MCF 10A (cell line): ENCODE measurements at regions of chr14 and their contacts with region 1.

Region 1: DNA sequence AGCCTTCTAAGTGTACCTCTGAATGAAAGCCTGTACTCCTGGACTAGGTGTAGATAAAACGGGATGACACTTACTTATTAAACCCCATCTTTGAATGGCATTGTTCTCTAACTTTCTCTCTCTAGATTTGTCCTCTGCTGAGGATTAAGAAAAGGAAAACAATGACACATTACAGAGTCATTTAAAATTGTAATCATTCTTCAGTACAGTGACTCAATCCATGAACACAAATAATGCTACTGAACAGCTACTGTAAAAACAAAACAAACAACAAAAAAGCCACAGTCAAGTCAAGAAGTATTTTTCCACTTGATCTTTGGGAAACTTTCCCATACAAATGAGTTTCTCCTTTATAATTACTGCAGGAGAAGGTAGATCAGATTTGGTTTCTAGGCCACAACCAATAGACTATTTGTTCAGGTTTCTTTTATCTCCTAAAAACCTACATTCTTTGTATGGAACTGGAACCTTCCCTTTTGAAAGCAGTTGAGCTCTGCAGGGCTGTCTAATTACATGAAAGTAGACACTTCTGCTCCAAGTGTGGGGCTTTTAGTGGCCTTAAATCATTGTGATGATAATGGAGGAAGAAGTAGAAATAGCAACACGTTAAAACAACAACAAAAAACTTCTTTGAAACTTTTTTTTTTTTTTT is 219.1 kb downstream of the ESR2 start:
- DNase-seq: peak; percentile 55
- H3K4me3 Mint-ChIP-seq: no peak overlapping the region
- H3K27ac Mint-ChIP-seq: peak overlapping the region; percentile 98
- H3K4me1 Mint-ChIP-seq: peaks cover 11% of the 10 kb centered on the region
- H3K27me3 Mint-ChIP-seq: no peaks in the 10 kb centered on the region
- CTCF ChIP-seq: no peak

Region 2: GRCh38 chr14:64060648-64061096 is 14.4 kb before region 1 on chr14:
- CTCF ChIA-PET with region 1: interaction called, 4 read pairs
- POLR2A ChIA-PET with region 1: interaction called, 121 read pairs
- intact Hi-C with region 1: no loop called
- DNase-seq: peak; percentile 95
- H3K4me3 Mint-ChIP-seq: no peak overlapping the region
- H3K27ac Mint-ChIP-seq: peak overlapping the region; percentile 98
- H3K4me1 Mint-ChIP-seq: peaks cover 17% of the 10 kb centered on the region
- H3K27me3 Mint-ChIP-seq: no peaks in the 10 kb centered on the region
- CTCF ChIP-seq: peak; percentile 62

Region 3: GRCh38 chr14:64095620-64096019 is 20.5 kb after region 1 on chr14:
- CTCF ChIA-PET with region 1: no interaction called
- POLR2A ChIA-PET with region 1: no interaction called
- intact Hi-C with region 1: no loop called
- DNase-seq: peak; percentile 72
- H3K4me3 Mint-ChIP-seq: no peak overlapping the region
- H3K27ac Mint-ChIP-seq: no peak overlapping the region
- H3K4me1 Mint-ChIP-seq: no peaks in the 10 kb centered on the region
- H3K27me3 Mint-ChIP-seq: no peaks in the 10 kb centered on the region
- CTCF ChIP-seq: no peak

Region 4: DNA sequence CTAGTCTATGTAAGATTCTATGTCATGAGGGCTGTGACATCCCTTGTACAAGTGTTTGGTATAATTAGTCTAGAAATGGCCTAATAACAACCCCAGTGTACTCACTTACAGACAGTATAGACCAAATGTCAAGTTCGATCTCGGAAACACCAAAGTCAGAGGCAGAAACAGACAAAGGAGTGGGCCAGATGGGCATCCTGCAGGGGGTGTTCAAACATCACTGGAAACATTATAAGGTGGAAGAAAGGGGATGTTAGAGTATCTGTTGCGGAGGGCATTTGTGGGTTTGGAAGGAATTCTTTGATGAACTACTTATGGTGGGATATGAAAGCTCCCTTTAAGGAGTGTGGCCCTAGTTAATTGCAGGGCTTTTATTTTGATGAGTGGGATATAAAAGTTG is 84.5 kb after region 1 on chr14:
- CTCF ChIA-PET with region 1: no interaction called
- POLR2A ChIA-PET with region 1: no interaction called
- intact Hi-C with region 1: no loop called
- DNase-seq: no peak
- H3K4me3 Mint-ChIP-seq: no peak overlapping the region
- H3K27ac Mint-ChIP-seq: no peak overlapping the region
- H3K4me1 Mint-ChIP-seq: peaks cover 5% of the 10 kb centered on the region
- H3K27me3 Mint-ChIP-seq: no peaks in the 10 kb centered on the region
- CTCF ChIP-seq: no peak